AG04450 (cell line): ENCODE measurements at regions of chr4 and their contacts with region 1.

Region 1: DNA sequence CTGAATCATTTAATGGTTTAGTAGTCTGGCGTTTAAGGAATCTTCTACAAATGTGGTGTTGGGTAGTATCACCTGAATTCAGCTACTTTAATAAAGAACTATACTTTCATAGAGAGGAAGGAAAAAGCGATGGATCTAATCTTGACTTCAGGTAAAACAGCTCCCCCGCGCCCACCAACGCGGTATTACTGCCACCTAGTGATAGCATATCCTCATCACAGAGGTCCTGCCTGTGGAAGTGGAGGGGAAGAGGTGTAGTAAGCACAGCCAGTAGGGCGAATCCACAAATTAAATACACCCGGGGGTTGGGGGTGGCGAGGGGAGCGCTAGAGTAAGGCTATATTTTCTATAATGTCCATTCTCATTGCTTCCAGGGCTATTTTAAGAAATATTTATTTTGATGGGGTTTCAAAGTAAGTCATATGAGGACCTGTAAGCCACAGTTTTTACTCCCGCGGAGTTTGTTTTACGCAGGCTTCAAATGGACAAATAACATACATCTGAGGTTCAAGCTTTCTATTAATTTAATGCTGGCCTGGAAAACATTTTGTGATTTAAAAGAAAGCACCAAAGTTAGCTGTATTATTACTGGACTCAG is 8.3 kb upstream of the DAPP1 start:
- DNase-seq: no peak
- H3K4me3 ChIP-seq: no peak overlapping the region
- H3K27ac ChIP-seq: no peak overlapping the region
- H3K27me3 ChIP-seq: no peaks in the 10 kb centered on the region
- CTCF ChIP-seq: peak; percentile 62

Region 2: DNA sequence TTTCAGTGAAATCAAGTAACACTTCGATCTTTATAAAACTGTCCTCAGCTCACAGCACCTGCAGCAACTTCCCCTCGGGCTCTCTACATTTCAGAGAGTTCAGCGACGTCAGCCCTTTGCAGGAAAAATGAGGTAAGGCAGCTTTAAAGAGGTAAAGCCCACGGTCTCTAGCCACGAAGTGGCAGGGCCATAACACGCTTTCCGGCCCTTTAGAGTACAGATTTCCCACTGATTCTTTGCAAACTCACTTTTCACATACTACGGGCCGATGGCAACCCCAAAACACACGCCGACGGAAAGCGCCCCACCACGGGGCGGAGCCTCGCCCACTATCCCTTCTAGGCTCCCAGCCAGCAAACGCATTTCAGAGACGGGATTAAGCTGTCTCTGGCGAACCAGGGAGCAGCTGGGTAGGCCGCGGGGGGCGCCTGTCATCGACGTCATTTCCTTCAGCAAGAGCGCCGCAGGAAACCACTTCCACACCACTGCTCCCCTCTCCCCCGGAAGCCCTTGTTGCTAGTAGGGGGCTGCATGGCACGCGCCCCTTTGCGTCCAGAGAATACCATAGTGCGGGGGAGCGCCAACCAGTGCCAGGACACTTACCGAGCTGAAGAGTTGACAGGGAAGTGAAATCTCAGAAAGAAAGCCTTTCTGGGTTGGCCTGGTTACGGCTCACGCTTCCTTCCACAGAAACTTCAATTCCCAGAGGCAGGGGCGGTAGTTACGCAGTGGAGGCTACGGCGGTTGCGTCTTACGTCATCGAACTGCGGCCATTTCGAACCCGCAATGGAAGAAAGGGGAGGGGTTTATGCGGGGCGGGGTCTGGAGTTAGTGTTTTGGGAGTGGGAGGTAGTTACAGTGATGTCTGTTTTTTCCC is 244.8 kb before region 1 on chr4 and contains the start of gene TRMT10A:
- CTCF ChIA-PET with region 1: interaction called, 23 read pairs
- POLR2A ChIA-PET with region 1: interaction called, 4 read pairs
- DNase-seq: peak; percentile 92
- H3K4me3 ChIP-seq: peak within 1 kb of the TSS; percentile 87
- H3K27ac ChIP-seq: peak within 1 kb of the TSS; percentile 97
- H3K27me3 ChIP-seq: no peaks in the 10 kb centered on the region
- CTCF ChIP-seq: no peak
- polyA plus RNA-seq, gene TRMT10A: 3.3 and 6.2 TPM in 2 replicates

Region 3: DNA sequence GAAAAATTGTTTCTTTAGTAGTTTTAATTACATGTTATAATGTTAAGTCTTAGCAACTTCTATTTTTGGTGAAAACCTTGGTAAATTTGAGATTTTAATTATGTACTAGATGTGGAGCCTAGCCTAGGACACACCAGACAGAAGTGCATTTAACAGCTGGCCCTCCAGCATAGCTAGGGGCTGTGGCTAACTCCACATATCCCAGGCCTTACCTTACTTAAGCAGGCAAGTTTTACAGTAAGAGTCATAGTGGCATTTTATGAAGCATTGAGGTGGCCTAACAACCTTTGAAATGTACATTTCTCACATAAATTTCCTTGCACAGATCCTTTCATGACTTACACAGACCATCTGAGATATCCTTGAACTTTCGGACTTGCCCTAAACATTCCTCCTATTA is 79.2 kb before region 1 on chr4:
- CTCF ChIA-PET with region 1: interaction called, 12 read pairs
- POLR2A ChIA-PET with region 1: no interaction called
- DNase-seq: no peak
- H3K4me3 ChIP-seq: no peak overlapping the region
- H3K27ac ChIP-seq: no peak overlapping the region
- H3K27me3 ChIP-seq: no peaks in the 10 kb centered on the region
- CTCF ChIP-seq: no peak

Region 4: GRCh38 chr4:99784842-99785241 is 23.5 kb before region 1 on chr4:
- CTCF ChIA-PET with region 1: no interaction called
- POLR2A ChIA-PET with region 1: no interaction called
- DNase-seq: no peak
- H3K4me3 ChIP-seq: no peak overlapping the region
- H3K27ac ChIP-seq: no peak overlapping the region
- H3K27me3 ChIP-seq: no peaks in the 10 kb centered on the region
- CTCF ChIP-seq: no peak